ENCODE measurements at regions of chr16 and their contacts with region 1.

Region 1: DNA sequence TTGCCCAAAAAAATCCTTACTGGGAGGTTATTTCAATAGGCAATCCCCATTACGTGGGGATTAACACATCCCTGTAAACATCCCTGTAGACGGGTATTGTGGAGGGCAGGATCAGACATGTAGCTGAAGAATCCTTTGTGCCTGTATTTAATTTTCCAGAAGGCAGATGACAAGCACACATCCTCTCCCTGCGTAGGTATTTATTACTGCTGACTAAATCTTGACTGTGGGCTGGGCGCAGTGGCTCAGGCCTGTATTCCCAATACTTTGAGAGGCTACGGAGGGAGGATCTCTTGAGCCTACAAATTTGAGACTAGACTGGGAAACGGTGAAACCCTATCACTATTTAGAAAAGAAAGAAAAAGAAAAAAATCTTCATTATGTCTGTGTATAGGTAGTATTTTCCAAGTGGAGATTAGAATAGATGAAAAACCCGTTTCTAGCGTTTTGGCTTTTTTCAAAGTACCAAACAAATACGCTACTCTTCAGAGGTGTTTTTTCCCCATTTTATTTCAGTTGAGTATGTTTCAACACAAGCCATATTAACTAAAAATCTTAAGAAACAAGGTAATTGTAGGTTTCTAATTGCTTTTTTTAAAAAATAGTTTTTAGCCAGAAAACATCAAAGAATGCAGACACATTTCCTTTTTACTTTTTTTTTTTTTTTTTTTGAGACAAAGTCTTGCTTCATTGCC is 1.5 kb upstream of the MARF1 start:
- DNase-seq: peak; percentile 68
- ATAC-seq: peak; percentile 66
- H3K4me3 ChIP-seq: peak overlapping the region; percentile 86
- H3K27ac ChIP-seq: peak overlapping the region; percentile 90
- H3K4me1 ChIP-seq: peaks cover 31% of the 10 kb centered on the region
- H3K27me3 ChIP-seq: no peaks in the 10 kb centered on the region
- CTCF ChIP-seq: no peak

Region 2: DNA sequence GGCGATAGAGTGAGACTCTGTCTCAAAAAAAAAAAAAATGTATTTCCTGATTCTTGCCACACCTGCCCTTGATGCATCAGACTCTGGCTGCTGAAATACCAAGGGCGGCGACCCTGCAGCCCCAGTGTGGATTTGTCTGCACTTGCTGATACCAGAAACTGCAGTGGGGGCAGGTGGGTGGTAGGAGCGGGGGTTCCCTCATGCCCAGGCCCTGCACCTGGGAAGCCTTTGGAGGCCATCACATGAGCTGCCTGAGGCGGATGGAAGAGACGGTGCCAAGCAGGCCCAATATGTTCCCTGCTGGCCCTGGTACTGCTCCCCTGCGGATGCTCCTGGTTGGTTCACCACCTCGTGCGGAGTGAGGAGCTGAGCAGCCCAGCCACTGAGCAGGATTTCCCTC is 52.1 kb before region 1 on chr16:
- CTCF ChIA-PET with region 1: no interaction called
- POLR2A ChIA-PET with region 1: no interaction called
- intact Hi-C with region 1: loop called (anchors 2 kb)
- DNase-seq: no peak
- ATAC-seq: no peak
- H3K4me3 ChIP-seq: no peak overlapping the region
- H3K27ac ChIP-seq: no peak overlapping the region
- H3K4me1 ChIP-seq: peaks cover 11% of the 10 kb centered on the region
- H3K27me3 ChIP-seq: no peaks in the 10 kb centered on the region
- CTCF ChIP-seq: no peak

Region 3: DNA sequence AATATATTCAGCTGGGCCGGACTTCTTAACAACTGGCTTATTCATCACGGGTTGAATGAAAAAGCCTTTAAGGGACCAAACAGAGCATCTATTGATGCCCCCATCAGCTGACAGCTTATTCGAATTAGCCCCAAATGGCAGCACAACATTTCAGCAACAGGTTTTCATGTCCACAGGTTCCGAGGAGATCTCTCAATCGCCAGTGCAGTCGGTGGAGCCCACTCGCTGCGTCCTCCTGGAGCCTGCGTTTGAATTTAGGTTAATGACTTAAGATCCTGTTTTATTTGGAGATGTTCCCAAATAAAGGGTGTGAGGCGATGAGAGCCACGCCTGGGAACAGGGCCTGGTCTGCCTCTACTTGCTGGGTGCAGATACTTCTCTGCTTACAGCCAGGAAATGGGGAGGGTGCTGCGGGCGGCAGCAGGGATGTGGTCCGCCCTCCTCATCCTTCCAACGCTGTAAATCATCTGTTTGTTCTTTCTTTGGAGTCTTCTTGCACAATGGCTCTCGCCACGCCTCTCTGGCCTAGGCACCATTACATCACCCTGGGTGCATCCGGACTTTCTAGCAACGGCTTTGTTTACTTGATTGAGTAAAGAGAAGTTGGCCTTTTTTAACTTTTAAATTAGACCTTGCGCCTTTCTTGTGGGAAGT is 28.2 kb after region 1 on chr16:
- CTCF ChIA-PET with region 1: no interaction called
- POLR2A ChIA-PET with region 1: interaction called, 4 read pairs
- intact Hi-C with region 1: loop called (anchors 2 kb)
- DNase-seq: peak; percentile 92
- ATAC-seq: peak; percentile 98
- H3K4me3 ChIP-seq: peak overlapping the region; percentile 37; the same call in 1 of the 2 replicates
- H3K27ac ChIP-seq: peak overlapping the region; percentile 86
- H3K4me1 ChIP-seq: peaks cover 23% of the 10 kb centered on the region
- H3K27me3 ChIP-seq: no peaks in the 10 kb centered on the region
- CTCF ChIP-seq: no peak

Region 4: DNA sequence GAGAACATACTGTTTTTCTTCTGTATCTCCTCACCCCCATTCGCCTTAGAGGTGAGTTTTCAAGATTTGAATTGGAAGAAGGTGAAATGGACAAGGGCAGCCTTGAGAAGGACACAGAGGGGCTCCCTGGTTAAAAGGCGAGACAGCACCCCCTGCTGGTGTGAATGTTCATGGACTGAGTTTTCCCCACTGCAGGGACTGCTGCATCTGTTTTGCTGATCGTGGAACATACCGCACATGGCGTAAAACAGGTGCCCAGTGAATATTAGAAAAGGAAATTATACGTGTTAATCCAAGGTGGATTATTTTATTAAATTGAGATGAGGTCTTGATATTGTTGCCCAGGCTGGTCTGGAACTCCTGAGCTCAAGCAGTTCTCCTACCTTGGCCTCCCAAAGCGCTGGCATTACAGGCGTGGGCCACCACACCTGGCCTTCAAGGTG is 60.2 kb after region 1 on chr16:
- CTCF ChIA-PET with region 1: no interaction called
- POLR2A ChIA-PET with region 1: no interaction called
- intact Hi-C with region 1: loop called (anchors 2 kb)
- DNase-seq: peak; percentile 73
- ATAC-seq: peak; percentile 79
- H3K4me3 ChIP-seq: no peak overlapping the region
- H3K27ac ChIP-seq: no peak overlapping the region
- H3K4me1 ChIP-seq: no peaks in the 10 kb centered on the region
- H3K27me3 ChIP-seq: no peaks in the 10 kb centered on the region
- CTCF ChIP-seq: peak; percentile 79

Measured in PC-3 (cell line).